T-cell (primary cell): ENCODE measurements at regions of chrX and their contacts with region 1.

Region 1: DNA sequence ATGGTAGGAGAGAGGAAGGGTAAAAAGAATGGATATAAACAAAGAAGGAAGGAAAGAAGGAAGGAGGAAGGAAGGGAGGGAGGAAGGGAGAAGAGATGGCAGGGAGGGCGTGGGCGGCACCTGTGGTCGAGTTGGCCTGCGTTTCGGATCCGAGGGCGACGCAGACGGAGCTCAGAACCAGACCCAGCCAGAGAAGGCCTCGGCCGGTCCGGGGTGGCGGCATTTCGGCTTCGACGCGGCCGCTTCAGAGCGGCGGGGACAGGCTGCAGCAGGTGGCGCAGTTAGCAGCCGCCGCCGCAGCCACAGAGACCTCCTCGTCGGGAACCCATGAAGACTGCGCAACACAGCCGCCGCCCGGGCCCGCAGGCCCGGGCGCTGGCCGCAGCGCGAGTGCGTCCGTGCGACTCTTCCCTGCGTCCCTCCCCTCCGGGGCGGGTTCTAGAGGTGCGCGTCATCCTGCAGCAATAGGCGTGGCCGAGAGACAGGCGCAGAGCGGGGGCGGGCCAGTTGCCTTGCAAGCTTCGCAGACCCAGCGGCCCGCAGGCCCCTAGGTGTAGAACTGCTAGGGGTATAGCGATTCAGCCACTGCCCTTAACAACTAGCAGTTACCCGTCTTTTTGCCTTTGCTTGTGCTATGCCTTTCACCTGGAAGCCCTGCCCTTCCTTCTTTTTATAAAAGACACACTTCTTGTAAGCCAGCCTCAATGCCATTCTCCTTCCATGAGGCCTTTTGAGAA is at the start of gene IDS:
- DNase-seq: peak; percentile 62 to 90 (median 82)
- ATAC-seq: peak; percentile 79 to 83 (median 80)
- H3K4me3 ChIP-seq: peak within 1 kb of the TSS; percentile 46 to 91
- H3K4me3 Mint-ChIP-seq: peak within 1 kb of the TSS; percentile 79 to 96 (median 88)
- H3K27ac ChIP-seq: peak within 1 kb of the TSS; percentile 98
- H3K27ac Mint-ChIP-seq: peak within 1 kb of the TSS; percentile 88 to 95
- H3K4me1 ChIP-seq: peaks cover 2 to 35% of the 10 kb centered on the region in 2 experiments
- H3K4me1 Mint-ChIP-seq: peaks cover 24 to 40% (median 31%) of the 10 kb centered on the region in 3 donors
- H3K27me3 ChIP-seq: peaks cover 0 to 6% of the 10 kb centered on the region in 2 experiments
- H3K27me3 Mint-ChIP-seq: peaks cover 0 to 14% of the 10 kb centered on the region in 2 donors
- total RNA-seq, gene IDS: 152 to 402 (median 182) TPM

Region 2: DNA sequence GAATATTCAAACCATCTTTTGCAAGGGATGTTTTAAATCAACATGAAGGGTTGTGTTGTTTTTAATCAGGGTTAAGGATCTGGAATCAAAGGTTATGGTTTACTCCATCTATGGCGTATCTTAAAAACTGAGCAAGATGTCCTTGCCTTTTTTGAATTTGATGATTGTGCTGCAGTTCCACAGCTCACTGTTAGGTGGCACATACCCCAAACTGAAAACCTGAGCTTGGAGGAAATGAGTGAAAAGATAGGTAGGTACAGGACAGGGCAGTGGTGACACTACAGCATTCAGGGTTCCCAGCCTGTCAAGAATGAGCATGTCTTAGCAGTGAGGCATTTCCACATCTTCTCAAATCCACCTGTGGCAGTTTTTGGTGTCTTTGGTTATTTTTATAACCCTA is 22.6 kb after region 1 on chrX:
- CTCF ChIA-PET with region 1: interaction called, 3 read pairs
- POLR2A ChIA-PET with region 1: interaction called, 4 to 11 read pairs
- DNase-seq: peak in 14 of 35 experiments; percentile 11 to 65 (median 30)
- ATAC-seq: peak in 1 of 4 experiments; percentile 32
- H3K4me3 ChIP-seq: no peak overlapping the region
- H3K4me3 Mint-ChIP-seq: no peak overlapping the region
- H3K27ac ChIP-seq: no peak overlapping the region
- H3K27ac Mint-ChIP-seq: peak overlapping the region; percentile 50 to 87
- H3K4me1 ChIP-seq: peaks cover 2 to 36% of the 10 kb centered on the region in 2 experiments
- H3K4me1 Mint-ChIP-seq: peaks cover 5 to 37% (median 27%) of the 10 kb centered on the region in 3 donors
- H3K27me3 ChIP-seq: no peaks in the 10 kb centered on the region
- H3K27me3 Mint-ChIP-seq: peaks cover 0 to 6% of the 10 kb centered on the region in 2 donors

Region 3: DNA sequence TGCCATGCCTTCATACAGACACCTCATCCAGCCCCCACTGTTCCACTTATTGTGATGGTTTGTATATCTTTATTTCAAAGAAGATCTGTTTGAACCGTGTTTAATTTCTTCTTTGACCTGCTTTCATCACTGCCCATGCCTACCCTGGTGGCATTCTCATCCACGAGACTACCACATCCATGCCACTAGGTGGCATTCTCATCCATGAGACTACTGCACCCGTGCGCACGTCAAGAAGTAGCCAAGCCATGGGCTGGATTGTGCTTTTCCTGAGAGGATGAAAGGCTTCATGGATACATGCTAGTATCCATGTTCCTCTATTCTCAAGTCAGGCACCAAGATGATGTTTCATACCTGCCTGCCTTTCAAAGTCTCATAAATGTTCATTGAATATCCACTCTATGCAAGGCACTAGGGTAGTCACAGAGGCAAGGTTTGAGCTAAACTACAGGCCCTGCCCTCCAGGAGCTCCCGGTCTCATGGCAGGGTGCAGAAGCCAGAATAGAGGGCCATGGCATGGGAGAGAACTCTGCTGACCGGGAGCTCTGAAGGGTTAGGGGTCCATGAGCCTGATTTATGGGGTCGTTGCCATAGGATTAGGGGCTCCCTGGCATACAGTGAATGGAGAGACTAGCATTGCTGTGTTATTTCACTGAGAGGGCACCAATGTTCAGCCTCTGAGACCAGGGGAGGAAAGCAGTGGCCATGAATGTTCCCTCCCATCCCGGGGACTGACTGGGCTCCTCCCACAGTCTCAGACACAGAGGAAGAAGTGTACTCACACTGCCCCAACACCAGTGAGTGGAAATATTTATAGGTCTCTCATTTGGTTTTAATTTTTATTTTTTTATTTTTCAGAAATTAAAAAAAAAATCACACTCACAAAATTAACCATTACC is 458.0 kb after region 1 on chrX:
- CTCF ChIA-PET with region 1: no interaction called
- POLR2A ChIA-PET with region 1: no interaction called
- DNase-seq: peak in 10 of 35 experiments; percentile 0 to 30 (median 4)
- ATAC-seq: no peak
- H3K4me3 ChIP-seq: no peak overlapping the region
- H3K4me3 Mint-ChIP-seq: no peak overlapping the region
- H3K27ac ChIP-seq: no peak overlapping the region
- H3K27ac Mint-ChIP-seq: no peak overlapping the region
- H3K4me1 ChIP-seq: no peaks in the 10 kb centered on the region
- H3K4me1 Mint-ChIP-seq: no peaks in the 10 kb centered on the region
- H3K27me3 ChIP-seq: no peaks in the 10 kb centered on the region
- H3K27me3 Mint-ChIP-seq: peaks cover 0 to 3% of the 10 kb centered on the region in 2 donors